RWPE1 (cell line): ENCODE measurements at regions of chr6 and their contacts with region 1.

Region 1: DNA sequence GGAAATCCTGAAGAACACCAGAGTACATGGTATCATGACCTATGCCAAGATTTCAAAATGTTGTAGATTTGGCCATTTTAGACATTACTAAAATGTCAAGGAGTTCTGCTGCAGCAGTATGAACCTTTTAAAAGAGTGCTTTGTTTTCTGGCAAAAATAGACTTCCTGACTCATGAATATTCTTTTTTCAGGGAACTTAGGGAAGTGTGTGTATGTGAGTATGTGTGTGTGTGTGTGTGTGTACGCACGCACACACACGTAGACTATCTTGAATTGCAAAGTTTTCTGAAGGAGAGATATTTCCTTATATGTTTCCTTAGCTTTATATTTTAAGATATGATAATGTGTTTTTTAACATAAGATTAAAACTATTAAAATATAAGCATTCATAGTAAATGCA is 161.2 kb downstream of the HS3ST5 start:
- DNase-seq: no peak
- H3K27ac ChIP-seq: no peak overlapping the region
- CTCF ChIP-seq: no peak

Region 2: DNA sequence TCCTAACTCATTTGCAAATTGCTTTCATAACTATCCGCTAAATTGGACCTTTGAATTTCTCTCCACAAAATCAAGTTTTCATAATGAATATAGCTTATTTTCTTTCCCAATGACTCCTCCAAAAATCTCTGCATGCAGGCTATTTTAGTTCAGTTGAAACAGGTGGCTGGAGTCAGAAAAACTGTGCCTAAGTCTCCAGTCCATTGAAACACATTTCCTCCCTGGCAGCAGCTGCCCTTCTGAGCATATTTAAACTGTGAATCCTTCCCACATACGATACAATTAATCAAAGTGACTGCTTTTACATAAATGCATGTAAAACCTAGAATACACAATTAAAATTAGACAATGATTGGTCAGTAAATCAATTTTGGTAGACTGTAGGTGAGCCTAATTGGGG is 669.1 kb before region 1 on chr6:
- CTCF ChIA-PET with region 1: no interaction called
- POLR2A ChIA-PET with region 1: interaction called, 11 read pairs
- DNase-seq: no peak
- H3K27ac ChIP-seq: no peak overlapping the region
- CTCF ChIP-seq: no peak

Region 3: GRCh38 chr6:113980937-113981554 is 200.6 kb before region 1 on chr6:
- CTCF ChIA-PET with region 1: no interaction called
- POLR2A ChIA-PET with region 1: no interaction called
- DNase-seq: peak; percentile 42
- H3K27ac ChIP-seq: no peak overlapping the region
- CTCF ChIP-seq: peak; percentile 52